Mammary epithelial cell (primary cell): ENCODE measurements at regions of chr5 and their contacts with region 1.

Region 1: GRCh38 chr5:169548315-169548714 is 35.3 kb upstream of the SPDL1 start:
- DNase-seq: peak; percentile 38
- H3K4me3 ChIP-seq: no peak overlapping the region
- H3K27ac ChIP-seq: no peak overlapping the region
- H3K4me1 ChIP-seq: no peaks in the 10 kb centered on the region
- H3K27me3 ChIP-seq: no peaks in the 10 kb centered on the region
- CTCF ChIP-seq: peak; percentile 58 to 66

Region 2: GRCh38 chr5:168679515-168679920 is 868.8 kb before region 1 on chr5:
- CTCF ChIA-PET with region 1: interaction called, 4 read pairs
- dilution Hi-C with region 1: no loop called
- in situ Hi-C with region 1: no loop called
- intact Hi-C with region 1: loop called (anchors 1 kb)
- DNase-seq: peak; percentile 52
- H3K4me3 ChIP-seq: no peak overlapping the region
- H3K27ac ChIP-seq: no peak overlapping the region
- H3K4me1 ChIP-seq: no peaks in the 10 kb centered on the region
- H3K27me3 ChIP-seq: no peaks in the 10 kb centered on the region
- CTCF ChIP-seq: peak; percentile 87 to 92

Region 3: GRCh38 chr5:168947212-168947868 is 601.0 kb before region 1 on chr5:
- CTCF ChIA-PET with region 1: no interaction called
- dilution Hi-C with region 1: no loop called
- in situ Hi-C with region 1: no loop called
- intact Hi-C with region 1: loop called (anchors 1 kb)
- DNase-seq: peak; percentile 24
- H3K4me3 ChIP-seq: no peak overlapping the region
- H3K27ac ChIP-seq: no peak overlapping the region
- H3K4me1 ChIP-seq: no peaks in the 10 kb centered on the region
- H3K27me3 ChIP-seq: no peaks in the 10 kb centered on the region
- CTCF ChIP-seq: peak; percentile 77 to 78

Region 4: GRCh38 chr5:169197343-169197742 is 351.0 kb before region 1 on chr5:
- CTCF ChIA-PET with region 1: no interaction called
- dilution Hi-C with region 1: no loop called
- in situ Hi-C with region 1: no loop called
- intact Hi-C with region 1: loop called (anchors 1 kb)
- DNase-seq: peak; percentile 24
- H3K4me3 ChIP-seq: no peak overlapping the region
- H3K27ac ChIP-seq: no peak overlapping the region
- H3K4me1 ChIP-seq: peaks cover 14% of the 10 kb centered on the region
- H3K27me3 ChIP-seq: no peaks in the 10 kb centered on the region
- CTCF ChIP-seq: peak; percentile 53 to 80

Region 5: GRCh38 chr5:169302491-169303118 is 245.7 kb before region 1 on chr5:
- CTCF ChIA-PET with region 1: no interaction called
- dilution Hi-C with region 1: no loop called
- in situ Hi-C with region 1: no loop called
- intact Hi-C with region 1: loop called (anchors 1 kb)
- DNase-seq: peak; percentile 66
- H3K4me3 ChIP-seq: no peak overlapping the region
- H3K27ac ChIP-seq: no peak overlapping the region
- H3K4me1 ChIP-seq: peaks cover 38% of the 10 kb centered on the region
- H3K27me3 ChIP-seq: no peaks in the 10 kb centered on the region
- CTCF ChIP-seq: peak; percentile 88 to 98

Region 6: GRCh38 chr5:169577951-169578350 is 29.6 kb after region 1 on chr5:
- CTCF ChIA-PET with region 1: no interaction called
- dilution Hi-C with region 1: no loop called
- in situ Hi-C with region 1: no loop called
- intact Hi-C with region 1: loop called (anchors 1 kb)
- DNase-seq: peak; percentile 32
- H3K4me3 ChIP-seq: no peak overlapping the region
- H3K27ac ChIP-seq: no peak overlapping the region
- H3K4me1 ChIP-seq: peaks cover 17% of the 10 kb centered on the region
- H3K27me3 ChIP-seq: no peaks in the 10 kb centered on the region
- CTCF ChIP-seq: peak; percentile 52 to 64